ENCODE measurements at regions of chr13 and their contacts with region 1.

Region 1: GRCh38 chr13:49976314-49977258 is 20.3 kb upstream of the TRIM13 start:
- DNase-seq: peak; percentile 68 to 75 (median 71)
- H3K4me3 ChIP-seq: no peak overlapping the region
- H3K4me3 Mint-ChIP-seq: no peak overlapping the region
- H3K27ac ChIP-seq: no peak overlapping the region
- H3K27ac Mint-ChIP-seq: no peak overlapping the region
- H3K4me1 ChIP-seq: no peaks in the 10 kb centered on the region
- H3K4me1 Mint-ChIP-seq: peaks cover 0 to 5% (median 3%) of the 10 kb centered on the region in 4 donors
- H3K27me3 ChIP-seq: no peaks in the 10 kb centered on the region
- H3K27me3 Mint-ChIP-seq: no peaks in the 10 kb centered on the region

Region 2: GRCh38 chr13:50387051-50387581 is 410.5 kb after region 1 on chr13:
- CTCF ChIA-PET with region 1: interaction called, 5 read pairs
- POLR2A ChIA-PET with region 1: no interaction called
- intact Hi-C with region 1: loop called (anchors 1 kb)
- DNase-seq: peak in 4 of 5 donors; percentile 15 to 34 (median 26)
- H3K4me3 ChIP-seq: no peak overlapping the region
- H3K4me3 Mint-ChIP-seq: peak overlapping the region in 1 of 8 donors; percentile 18
- H3K27ac ChIP-seq: no peak overlapping the region
- H3K27ac Mint-ChIP-seq: peak overlapping the region in 1 of 7 donors; percentile 43
- H3K4me1 ChIP-seq: peaks cover 19% of the 10 kb centered on the region
- H3K4me1 Mint-ChIP-seq: peaks cover 6 to 27% (median 22%) of the 10 kb centered on the region in 4 donors
- H3K27me3 ChIP-seq: no peaks in the 10 kb centered on the region
- H3K27me3 Mint-ChIP-seq: peaks cover 0 to 2% of the 10 kb centered on the region in 2 donors

Region 3: GRCh38 chr13:50531917-50532899 is 555.6 kb after region 1 on chr13:
- CTCF ChIA-PET with region 1: interaction called, 9 read pairs
- POLR2A ChIA-PET with region 1: no interaction called
- intact Hi-C with region 1: loop called (anchors 1 kb)
- DNase-seq: peak in 2 of 5 donors; percentile 14 to 18
- H3K4me3 ChIP-seq: no peak overlapping the region
- H3K4me3 Mint-ChIP-seq: no peak overlapping the region
- H3K27ac ChIP-seq: no peak overlapping the region
- H3K27ac Mint-ChIP-seq: no peak overlapping the region
- H3K4me1 ChIP-seq: peaks cover 18% of the 10 kb centered on the region
- H3K4me1 Mint-ChIP-seq: peaks cover 11 to 26% (median 22%) of the 10 kb centered on the region in 4 donors
- H3K27me3 ChIP-seq: no peaks in the 10 kb centered on the region
- H3K27me3 Mint-ChIP-seq: no peaks in the 10 kb centered on the region

Region 4: DNA sequence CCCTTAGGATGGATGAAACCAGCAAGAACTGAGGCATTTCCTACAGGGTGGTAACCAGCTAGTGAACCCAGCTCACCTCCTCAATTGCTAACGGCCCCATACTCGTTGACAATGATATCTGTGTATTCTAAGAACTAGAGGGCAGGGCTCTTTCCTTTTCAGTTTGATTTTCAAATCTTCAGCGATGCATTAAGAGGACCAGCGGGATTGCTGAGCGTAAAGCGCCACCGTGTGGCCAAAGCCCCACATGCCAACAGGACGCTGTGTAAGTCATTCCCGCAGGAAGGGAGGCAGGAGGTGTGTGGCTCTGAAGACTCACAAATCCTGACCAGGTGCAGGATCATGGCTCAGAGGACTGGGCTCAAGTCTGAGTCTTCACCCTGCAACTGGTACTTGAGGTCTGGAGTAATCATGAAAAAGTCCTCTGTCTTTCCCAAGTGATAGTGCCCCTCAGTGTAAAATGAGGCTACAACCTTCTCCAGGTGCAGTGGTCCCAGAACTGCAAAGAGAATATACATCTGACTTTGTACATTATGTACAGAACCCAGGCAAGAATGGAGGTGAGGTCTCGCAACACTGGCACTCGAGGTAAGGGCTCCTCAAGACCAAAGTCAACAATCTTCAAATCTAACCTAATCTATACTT is 1093.5 kb after region 1 on chr13:
- CTCF ChIA-PET with region 1: interaction called, 68 read pairs
- POLR2A ChIA-PET with region 1: no interaction called
- intact Hi-C with region 1: loop called (anchors 1 kb)
- DNase-seq: peak; percentile 61 to 69 (median 64)
- H3K4me3 ChIP-seq: no peak overlapping the region
- H3K4me3 Mint-ChIP-seq: no peak overlapping the region
- H3K27ac ChIP-seq: no peak overlapping the region
- H3K27ac Mint-ChIP-seq: peak overlapping the region in 3 of 7 donors; percentile 9 to 24 (median 11)
- H3K4me1 ChIP-seq: peaks cover 7% of the 10 kb centered on the region
- H3K4me1 Mint-ChIP-seq: peaks cover 5 to 8% (median 7%) of the 10 kb centered on the region in 4 donors
- H3K27me3 ChIP-seq: no peaks in the 10 kb centered on the region
- H3K27me3 Mint-ChIP-seq: peaks cover 11 to 13% of the 10 kb centered on the region in 2 donors

Region 5: GRCh38 chr13:51955281-51955771 is 1978.7 kb after region 1 on chr13:
- CTCF ChIA-PET with region 1: no interaction called
- POLR2A ChIA-PET with region 1: no interaction called
- intact Hi-C with region 1: no loop called
- DNase-seq: no peak
- H3K4me3 ChIP-seq: no peak overlapping the region
- H3K4me3 Mint-ChIP-seq: no peak overlapping the region
- H3K27ac ChIP-seq: no peak overlapping the region
- H3K27ac Mint-ChIP-seq: no peak overlapping the region
- H3K4me1 ChIP-seq: peaks cover 52% of the 10 kb centered on the region
- H3K4me1 Mint-ChIP-seq: peaks cover 43 to 58% (median 48%) of the 10 kb centered on the region in 4 donors
- H3K27me3 ChIP-seq: no peaks in the 10 kb centered on the region
- H3K27me3 Mint-ChIP-seq: peaks cover 0 to 2% of the 10 kb centered on the region in 2 donors

Measured in CD4-positive, alpha-beta memory T cell (primary cell).